PC-3 (cell line): ENCODE measurements at regions of chr3 and their contacts with region 1.

Region 1: DNA sequence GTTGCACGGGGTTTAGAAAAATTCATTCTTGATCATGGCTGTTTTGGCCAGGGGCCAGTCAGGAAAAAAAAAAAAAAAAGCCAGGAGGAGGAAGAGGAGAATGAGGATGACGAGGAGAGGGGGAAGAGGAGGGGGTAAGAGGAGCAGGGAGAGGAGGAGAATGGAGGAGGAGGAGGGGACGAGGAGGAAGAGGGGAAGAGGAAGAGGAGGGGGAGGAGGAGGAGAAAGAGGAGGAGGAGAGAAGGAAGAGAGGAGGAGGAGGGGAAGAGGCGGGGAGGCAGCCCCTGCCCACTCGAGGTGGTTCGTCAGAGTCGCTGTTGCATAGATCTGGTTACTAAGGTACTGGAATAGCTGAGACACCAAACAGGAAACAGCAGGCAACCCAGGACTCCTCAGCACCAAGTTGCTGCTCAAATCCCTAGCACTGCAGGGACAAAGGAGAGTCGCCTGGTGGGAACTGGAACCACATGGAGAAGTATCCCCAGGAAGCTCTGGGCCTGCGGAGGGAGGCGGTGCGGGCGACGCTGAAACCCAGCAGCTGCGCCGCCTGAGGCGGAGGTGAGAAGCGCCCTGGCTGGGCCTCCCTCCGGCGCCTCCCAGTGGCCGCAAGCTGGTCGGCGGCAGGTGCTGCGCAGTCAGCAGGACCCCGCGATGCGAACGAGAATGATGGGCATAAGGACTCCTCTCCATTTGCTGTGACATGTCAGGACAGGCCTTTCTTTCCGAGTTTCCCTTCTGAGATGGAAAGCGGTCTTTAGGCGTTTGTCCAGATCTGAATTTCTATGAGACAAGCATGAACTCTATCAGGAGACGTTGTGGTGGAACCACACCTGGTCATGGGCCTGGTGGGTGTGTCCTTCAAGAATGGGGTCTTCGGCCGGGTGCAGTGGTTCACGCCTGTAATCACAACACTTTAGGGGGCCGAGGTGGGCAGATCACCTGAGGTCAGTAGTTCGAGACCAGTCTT is 17.5 kb downstream of the FAM240A start:
- DNase-seq: peak; percentile 79
- ATAC-seq: peak; percentile 96
- H3K4me3 ChIP-seq: no peak overlapping the region
- H3K27ac ChIP-seq: no peak overlapping the region
- H3K4me1 ChIP-seq: no peaks in the 10 kb centered on the region; the same call in 1 of the 2 replicates
- H3K27me3 ChIP-seq: no peaks in the 10 kb centered on the region
- CTCF ChIP-seq: peak; percentile 97

Region 2: GRCh38 chr3:45948311-45948781 is 681.5 kb before region 1 on chr3:
- CTCF ChIA-PET with region 1: no interaction called
- POLR2A ChIA-PET with region 1: no interaction called
- intact Hi-C with region 1: no loop called
- DNase-seq: peak; percentile 11
- ATAC-seq: peak; percentile 89
- H3K4me3 ChIP-seq: no peak overlapping the region
- H3K27ac ChIP-seq: no peak overlapping the region
- H3K4me1 ChIP-seq: peaks cover 14% of the 10 kb centered on the region
- H3K27me3 ChIP-seq: no peaks in the 10 kb centered on the region
- CTCF ChIP-seq: no peak

Region 3: GRCh38 chr3:46478341-46478740 is 151.5 kb before region 1 on chr3:
- CTCF ChIA-PET with region 1: no interaction called
- POLR2A ChIA-PET with region 1: no interaction called
- intact Hi-C with region 1: no loop called
- DNase-seq: no peak
- ATAC-seq: no peak
- H3K4me3 ChIP-seq: no peak overlapping the region
- H3K27ac ChIP-seq: no peak overlapping the region
- H3K4me1 ChIP-seq: no peaks in the 10 kb centered on the region; the same call in 1 of the 2 replicates
- H3K27me3 ChIP-seq: peaks cover 5% of the 10 kb centered on the region; the same call in 1 of the 2 replicates
- CTCF ChIP-seq: no peak

Region 4: DNA sequence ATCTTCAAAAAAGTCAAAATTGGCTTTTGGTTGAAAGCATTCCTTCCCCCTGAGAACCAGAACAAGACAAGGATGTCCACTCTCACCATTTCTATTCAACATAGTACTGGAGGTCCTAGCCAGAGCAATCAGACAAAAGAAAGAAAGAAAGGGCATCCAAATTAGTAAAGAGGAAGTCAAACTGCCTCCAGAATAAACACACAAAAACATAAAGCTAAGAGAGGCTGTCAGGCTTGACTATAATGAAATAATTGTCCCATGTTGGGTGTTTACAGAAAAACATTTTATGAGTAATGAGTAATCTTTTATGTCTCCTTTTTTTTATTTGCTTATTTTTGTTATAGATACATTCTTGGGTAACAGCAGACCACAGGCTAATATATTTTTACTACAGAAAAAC is 35.9 kb before region 1 on chr3:
- CTCF ChIA-PET with region 1: interaction called, 3 read pairs
- POLR2A ChIA-PET with region 1: no interaction called
- intact Hi-C with region 1: loop called (anchors 2 kb)
- DNase-seq: peak; percentile 33
- ATAC-seq: peak; percentile 84
- H3K4me3 ChIP-seq: no peak overlapping the region
- H3K27ac ChIP-seq: no peak overlapping the region
- H3K4me1 ChIP-seq: 0 out of 2 replicates have a peak, but pooled peaks cover 8% of the 10 kb centered on the region
- H3K27me3 ChIP-seq: no peaks in the 10 kb centered on the region
- CTCF ChIP-seq: no peak